ENCODE measurements at regions of chr2 and their contacts with region 1.

Region 1: DNA sequence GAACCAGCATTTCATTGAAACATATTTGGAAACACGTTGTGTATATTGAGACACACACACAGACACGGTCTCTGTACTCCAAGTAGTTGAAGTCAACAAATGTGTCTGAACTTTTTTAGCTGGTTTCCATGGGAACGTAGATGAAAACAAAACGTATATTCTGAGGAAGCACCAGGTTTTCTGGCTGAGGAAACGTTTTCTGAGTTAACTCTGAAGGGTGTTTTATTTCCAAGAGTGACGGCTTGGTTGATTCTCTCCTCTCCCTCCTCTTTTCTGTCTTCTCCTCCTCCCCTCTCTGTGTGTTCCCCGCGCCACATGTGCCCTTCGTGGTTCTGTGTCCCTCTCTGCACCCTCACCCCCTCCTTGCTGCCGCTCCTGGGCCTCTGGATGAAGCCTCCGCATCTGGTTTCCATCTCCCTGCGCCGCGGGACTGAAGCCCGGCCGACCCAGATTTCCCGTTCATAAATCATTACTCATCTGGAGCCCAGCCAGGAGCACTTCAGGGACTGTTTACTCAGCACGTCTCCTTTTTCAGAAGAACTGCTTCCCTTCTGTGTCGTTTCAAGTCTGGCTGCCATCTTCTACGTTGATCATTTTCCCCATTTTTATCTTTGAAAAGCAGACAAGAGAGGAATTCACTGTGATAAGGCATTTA is 122.7 kb downstream of the COL6A3 start:
- DNase-seq: peak; percentile 87
- H3K4me3 ChIP-seq: no peak overlapping the region
- H3K27ac ChIP-seq: peak overlapping the region; percentile 40 to 60
- H3K4me1 ChIP-seq: no peaks in the 10 kb centered on the region
- H3K27me3 ChIP-seq: no peaks in the 10 kb centered on the region
- CTCF ChIP-seq: no peak
- POLR2A ChIP-seq: no peak

Region 2: GRCh38 chr2:237196866-237197618 is 94.2 kb before region 1 on chr2:
- intact Hi-C with region 1: loop called (anchors 10 kb)
- DNase-seq: no peak
- H3K4me3 ChIP-seq: no peak overlapping the region
- H3K27ac ChIP-seq: no peak overlapping the region
- H3K4me1 ChIP-seq: no peaks in the 10 kb centered on the region
- H3K27me3 ChIP-seq: no peaks in the 10 kb centered on the region
- CTCF ChIP-seq: no peak
- POLR2A ChIP-seq: no peak

Measured in prostate gland (tissue), 2 donors.